Motor neuron (in vitro differentiated cells): ENCODE measurements at regions of chr1 and their contacts with region 1.

Region 1: GRCh38 chr1:246280551-246280950 is 226.5 kb downstream of the SMYD3 start:
- ATAC-seq: peak in 7 of 8 experiments; percentile 22 to 63 (median 47)
- H3K4me3 ChIP-seq: no peak overlapping the region
- H3K27ac ChIP-seq: no peak overlapping the region
- H3K4me1 ChIP-seq: peaks cover 6 to 11% of the 10 kb centered on the region in 2 donors

Region 2: GRCh38 chr1:246428542-246429308 is 148.2 kb after region 1 on chr1:
- in situ Hi-C with region 1: loop called in 1 of 9 experiments (anchors 25 kb)
- ATAC-seq: peak in 2 of 8 experiments; percentile 31 to 86
- H3K4me3 ChIP-seq: no peak overlapping the region
- H3K27ac ChIP-seq: no peak overlapping the region
- H3K4me1 ChIP-seq: no peaks in the 10 kb centered on the region

Region 3: DNA sequence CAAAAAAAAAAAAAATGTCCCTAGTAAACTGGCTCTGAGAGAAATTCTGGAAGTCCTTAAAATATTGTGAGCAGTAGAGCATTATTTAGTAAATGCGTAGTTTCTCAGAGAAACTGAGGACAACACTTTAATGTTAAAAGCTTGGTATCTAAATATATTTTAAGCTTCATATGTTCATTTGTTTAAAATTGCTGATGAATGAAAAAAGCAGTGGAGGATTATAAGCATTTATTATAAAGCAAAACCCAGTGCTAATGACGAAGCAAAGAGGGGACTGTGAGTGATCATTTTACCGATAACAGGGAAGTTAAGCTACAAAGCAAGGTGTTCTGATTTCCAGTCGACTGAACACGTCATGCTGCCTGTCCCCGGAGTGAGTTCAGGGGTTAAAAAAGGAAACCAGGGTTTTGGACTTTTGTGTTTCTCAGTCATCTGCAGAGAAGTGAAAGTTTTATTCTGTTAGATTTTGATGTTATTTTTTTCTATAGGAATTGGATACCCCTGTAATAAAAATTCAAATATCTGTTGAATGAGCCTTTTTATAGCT is 379.1 kb after region 1 on chr1:
- in situ Hi-C with region 1: no loop called
- ATAC-seq: no peak
- H3K4me3 ChIP-seq: no peak overlapping the region
- H3K27ac ChIP-seq: no peak overlapping the region
- H3K4me1 ChIP-seq: peaks cover 7 to 8% of the 10 kb centered on the region in 2 donors